ENCODE measurements at regions of chr11 and their contacts with region 1.

Region 1: GRCh38 chr11:20647976-20648565 is 21.3 kb upstream of the NELL1 start:
- DNase-seq: peak in 1 of 2 experiments; percentile 70
- H3K4me3 ChIP-seq: no peak overlapping the region
- H3K4me3 Mint-ChIP-seq: no peak overlapping the region
- H3K27ac Mint-ChIP-seq: no peak overlapping the region
- H3K4me1 ChIP-seq: no peaks in the 10 kb centered on the region
- H3K4me1 Mint-ChIP-seq: no peaks in the 10 kb centered on the region
- H3K27me3 ChIP-seq: no peaks in the 10 kb centered on the region; the same call in 1 of the 2 replicates
- H3K27me3 Mint-ChIP-seq: peaks cover 17% of the 10 kb centered on the region
- CTCF ChIP-seq: peak; percentile 86

Region 2: GRCh38 chr11:20671856-20672546 is 23.9 kb after region 1 on chr11:
- CTCF ChIA-PET with region 1: no interaction called
- POLR2A ChIA-PET with region 1: no interaction called
- intact Hi-C with region 1: loop called (anchors 1 kb)
- DNase-seq: no peak
- H3K4me3 ChIP-seq: no peak overlapping the region
- H3K4me3 Mint-ChIP-seq: no peak overlapping the region
- H3K27ac Mint-ChIP-seq: no peak overlapping the region
- H3K4me1 ChIP-seq: no peaks in the 10 kb centered on the region
- H3K4me1 Mint-ChIP-seq: no peaks in the 10 kb centered on the region
- H3K27me3 ChIP-seq: no peaks in the 10 kb centered on the region
- H3K27me3 Mint-ChIP-seq: peaks cover 20% of the 10 kb centered on the region
- CTCF ChIP-seq: peak in 1 of 2 experiments; percentile 33

Region 3: GRCh38 chr11:21026685-21027084 is 378.6 kb after region 1 on chr11:
- CTCF ChIA-PET with region 1: no interaction called
- POLR2A ChIA-PET with region 1: no interaction called
- intact Hi-C with region 1: loop called (anchors 1 kb)
- DNase-seq: no peak
- H3K4me3 ChIP-seq: no peak overlapping the region
- H3K4me3 Mint-ChIP-seq: no peak overlapping the region
- H3K27ac Mint-ChIP-seq: no peak overlapping the region
- H3K4me1 ChIP-seq: no peaks in the 10 kb centered on the region
- H3K4me1 Mint-ChIP-seq: no peaks in the 10 kb centered on the region
- H3K27me3 ChIP-seq: no peaks in the 10 kb centered on the region
- H3K27me3 Mint-ChIP-seq: peaks cover 6% of the 10 kb centered on the region
- CTCF ChIP-seq: no peak

Region 4: GRCh38 chr11:21323617-21324016 is 675.5 kb after region 1 on chr11:
- CTCF ChIA-PET with region 1: no interaction called
- POLR2A ChIA-PET with region 1: no interaction called
- intact Hi-C with region 1: loop called (anchors 2 kb)
- DNase-seq: no peak
- H3K4me3 ChIP-seq: no peak overlapping the region
- H3K4me3 Mint-ChIP-seq: no peak overlapping the region
- H3K27ac Mint-ChIP-seq: no peak overlapping the region
- H3K4me1 ChIP-seq: no peaks in the 10 kb centered on the region
- H3K4me1 Mint-ChIP-seq: no peaks in the 10 kb centered on the region
- H3K27me3 ChIP-seq: no peaks in the 10 kb centered on the region
- H3K27me3 Mint-ChIP-seq: no peaks in the 10 kb centered on the region
- CTCF ChIP-seq: peak; percentile 6 to 25

Region 5: DNA sequence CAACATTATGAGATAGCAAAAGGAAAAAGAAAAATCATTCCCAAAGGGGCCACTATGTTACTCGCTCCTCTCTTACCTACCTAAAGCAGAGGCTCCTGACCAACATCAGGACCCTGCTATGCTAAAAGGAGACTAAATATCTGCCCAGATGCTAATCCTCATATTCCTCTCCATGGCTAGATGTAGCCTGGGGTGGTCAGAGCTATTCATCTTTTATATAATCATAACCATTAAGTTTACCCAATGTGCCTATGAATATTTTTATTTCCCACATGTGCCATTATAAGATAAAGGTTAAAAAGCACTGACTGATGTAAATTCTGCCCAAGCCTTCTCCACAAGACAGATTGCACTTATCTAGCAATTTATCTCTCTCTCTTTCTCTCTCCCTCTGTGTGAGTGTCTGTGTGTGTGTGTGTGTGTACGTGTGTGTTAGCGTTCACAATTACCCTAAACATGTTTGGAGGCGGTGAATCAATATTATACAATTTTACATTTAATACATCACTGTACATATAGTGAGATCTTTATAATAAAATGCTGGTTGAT is 1503.7 kb after region 1 on chr11:
- CTCF ChIA-PET with region 1: no interaction called
- POLR2A ChIA-PET with region 1: no interaction called
- intact Hi-C with region 1: loop called (anchors 5 kb)
- DNase-seq: no peak
- H3K4me3 ChIP-seq: no peak overlapping the region
- H3K4me3 Mint-ChIP-seq: no peak overlapping the region
- H3K27ac Mint-ChIP-seq: no peak overlapping the region
- H3K4me1 ChIP-seq: no peaks in the 10 kb centered on the region
- H3K4me1 Mint-ChIP-seq: no peaks in the 10 kb centered on the region
- H3K27me3 ChIP-seq: no peaks in the 10 kb centered on the region; the same call in 1 of the 2 replicates
- H3K27me3 Mint-ChIP-seq: peaks cover 3% of the 10 kb centered on the region
- CTCF ChIP-seq: no peak